CD8-positive, alpha-beta T cell (primary cell): ENCODE measurements at regions of chr12 and their contacts with region 1.

Region 1: DNA sequence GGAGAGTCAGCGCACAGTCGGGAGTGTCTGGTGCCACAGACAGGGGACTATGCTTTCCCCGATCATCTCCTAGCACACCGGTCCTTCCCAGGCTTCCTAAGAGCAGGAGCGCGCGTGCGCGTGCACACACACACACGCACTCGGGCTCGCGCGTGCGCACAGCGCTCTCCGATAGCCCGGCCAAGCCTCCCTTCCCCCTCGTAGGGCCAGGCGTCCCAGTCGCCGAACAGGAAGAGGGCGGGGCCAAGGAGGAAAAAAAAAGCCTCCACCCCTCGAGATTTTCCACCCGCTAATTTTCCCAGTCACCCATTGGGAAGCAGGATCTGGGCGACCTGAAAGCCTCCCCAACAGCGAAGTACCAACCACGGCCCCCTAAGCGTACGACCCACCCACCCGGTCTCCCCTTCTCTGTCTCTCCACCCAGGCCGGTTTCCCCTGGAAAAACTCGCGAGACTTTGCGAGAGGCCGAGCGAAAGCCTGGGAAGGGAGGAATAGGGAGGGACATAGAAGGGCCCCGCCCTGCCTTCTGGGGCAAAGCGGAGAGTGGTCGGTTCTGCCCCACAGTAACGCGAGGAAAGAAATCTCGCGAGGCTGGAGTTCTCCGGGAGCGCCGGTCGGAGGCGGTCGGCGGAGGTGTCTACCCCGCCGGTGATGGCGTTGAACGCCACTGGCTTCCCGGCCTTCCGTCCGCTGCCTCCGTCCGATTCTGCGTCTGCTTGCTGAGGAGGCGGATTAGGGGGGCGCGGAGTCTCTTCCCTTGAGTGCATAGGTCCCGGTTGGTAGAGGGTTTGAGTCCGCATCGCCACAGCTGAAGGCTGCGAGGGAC is at the starts of genes FGFR1OP2 and INTS13:
- DNase-seq: peak; percentile 90 to 99 (median 96)
- ATAC-seq: peak; percentile 89
- H3K4me3 ChIP-seq: peak within 1 kb of the TSS; percentile 92 to 97
- H3K4me3 Mint-ChIP-seq: peak within 1 kb of the TSS; percentile 98
- H3K27ac ChIP-seq: peak within 1 kb of the TSS; percentile 89 to 94
- H3K27ac Mint-ChIP-seq: peak within 1 kb of the TSS; percentile 97
- H3K4me1 ChIP-seq: peaks cover 47% of the 10 kb centered on the region
- H3K4me1 Mint-ChIP-seq: peaks cover 74% of the 10 kb centered on the region
- H3K27me3 ChIP-seq: no peaks in the 10 kb centered on the region
- H3K27me3 Mint-ChIP-seq: no peaks in the 10 kb centered on the region
- CTCF ChIP-seq: no peak
- total RNA-seq, gene FGFR1OP2: 44.1 to 47.5 TPM
- total RNA-seq, gene INTS13: 11.8 to 12.1 TPM

Region 2: DNA sequence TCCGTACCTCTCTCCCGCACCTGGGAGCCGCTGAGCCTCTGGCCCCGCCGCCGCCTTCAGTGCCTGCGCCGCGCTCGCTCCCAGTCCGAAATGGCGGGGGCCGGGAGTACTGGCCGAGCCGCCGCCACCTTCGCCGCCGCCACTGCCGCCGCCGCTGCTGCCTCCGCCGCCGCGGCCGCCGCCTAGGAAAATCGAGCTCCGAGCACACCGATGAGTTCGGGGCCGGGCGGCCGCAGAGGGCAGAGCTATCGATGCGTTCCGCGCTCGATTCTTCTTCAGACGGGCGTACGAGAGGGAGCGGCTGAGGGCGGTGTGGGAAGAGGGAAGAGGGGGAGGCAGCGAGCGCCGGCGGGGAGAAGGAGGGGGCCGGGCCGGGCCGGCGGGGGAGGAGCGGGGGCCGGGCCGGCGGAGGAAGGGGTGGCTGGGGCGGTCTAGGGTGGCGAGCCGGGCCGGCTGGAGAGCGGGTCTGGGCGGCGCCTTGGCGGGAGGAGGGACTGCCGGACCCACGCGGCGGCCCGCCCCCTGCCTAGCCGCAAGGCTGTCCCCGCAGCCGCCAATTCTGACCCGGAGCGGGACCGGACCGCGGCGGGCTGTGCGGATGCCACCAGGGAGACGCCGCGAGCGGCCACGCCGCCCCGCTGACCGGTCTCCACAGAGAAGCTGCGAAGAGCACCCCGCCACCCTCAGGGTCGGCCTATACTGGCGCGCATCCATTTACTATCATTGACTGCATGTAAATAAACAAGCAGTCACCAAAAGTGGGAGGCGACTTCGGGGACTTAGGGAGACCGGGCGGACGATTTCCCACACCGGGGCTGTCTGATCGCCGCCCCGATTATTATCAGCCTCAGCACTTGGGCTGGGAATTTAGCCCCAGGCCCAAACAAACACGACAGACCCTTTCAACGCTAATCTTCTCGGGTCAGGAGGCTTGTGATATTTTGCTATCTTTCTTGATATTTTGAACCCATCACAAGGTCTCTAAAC is 1687.1 kb before region 1 on chr12 and contains the start of gene KRAS:
- CTCF ChIA-PET with region 1: no interaction called
- POLR2A ChIA-PET with region 1: no interaction called
- intact Hi-C with region 1: loop called in 1 of 2 experiments (anchors 2 kb)
- DNase-seq: peak; percentile 84 to 98 (median 91)
- ATAC-seq: peak; percentile 90
- H3K4me3 ChIP-seq: peak within 1 kb of the TSS; percentile 70 to 79
- H3K4me3 Mint-ChIP-seq: peak within 1 kb of the TSS; percentile 93
- H3K27ac ChIP-seq: peak within 1 kb of the TSS; percentile 67 to 75
- H3K27ac Mint-ChIP-seq: peak within 1 kb of the TSS; percentile 95
- H3K4me1 ChIP-seq: peaks cover 11% of the 10 kb centered on the region
- H3K4me1 Mint-ChIP-seq: peaks cover 38% of the 10 kb centered on the region
- H3K27me3 ChIP-seq: no peaks in the 10 kb centered on the region
- H3K27me3 Mint-ChIP-seq: no peaks in the 10 kb centered on the region
- CTCF ChIP-seq: no peak
- total RNA-seq, gene KRAS: 47.1 to 49.3 TPM

Region 3: DNA sequence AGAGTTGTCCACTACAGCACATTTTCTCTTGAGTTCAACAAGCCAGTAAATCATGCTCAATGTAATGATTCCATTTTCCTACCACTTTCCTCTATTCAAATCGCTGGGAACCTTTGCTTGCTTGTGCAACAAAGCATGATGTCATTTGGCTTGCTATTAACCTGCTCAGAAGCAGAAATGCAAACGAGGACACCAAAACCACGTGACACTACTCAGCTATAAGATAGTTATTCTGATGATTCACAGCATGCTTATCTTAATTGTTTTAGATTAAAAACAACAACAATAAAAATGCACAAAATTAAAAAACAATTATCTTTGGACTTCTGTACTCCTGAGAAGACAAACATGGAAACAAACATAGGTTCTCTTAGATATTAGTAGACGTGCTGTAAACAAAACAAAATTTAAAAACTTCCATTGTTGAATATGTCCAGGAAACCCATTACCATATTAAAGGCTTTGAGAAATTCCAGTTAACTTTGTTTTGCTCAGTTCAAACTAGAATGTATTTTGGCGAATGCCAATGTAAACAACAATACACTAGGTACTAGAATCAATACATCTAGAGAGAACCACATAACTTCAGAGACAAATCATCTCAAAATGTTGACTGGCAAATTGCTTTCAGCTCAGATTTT is 1609.9 kb before region 1 on chr12:
- CTCF ChIA-PET with region 1: no interaction called
- POLR2A ChIA-PET with region 1: no interaction called
- intact Hi-C with region 1: no loop called
- DNase-seq: no peak
- ATAC-seq: no peak
- H3K4me3 ChIP-seq: no peak overlapping the region
- H3K4me3 Mint-ChIP-seq: no peak overlapping the region
- H3K27ac ChIP-seq: no peak overlapping the region
- H3K27ac Mint-ChIP-seq: no peak overlapping the region
- H3K4me1 ChIP-seq: peaks cover 11% of the 10 kb centered on the region
- H3K4me1 Mint-ChIP-seq: peaks cover 19% of the 10 kb centered on the region
- H3K27me3 ChIP-seq: no peaks in the 10 kb centered on the region
- H3K27me3 Mint-ChIP-seq: no peaks in the 10 kb centered on the region
- CTCF ChIP-seq: no peak

Region 4: DNA sequence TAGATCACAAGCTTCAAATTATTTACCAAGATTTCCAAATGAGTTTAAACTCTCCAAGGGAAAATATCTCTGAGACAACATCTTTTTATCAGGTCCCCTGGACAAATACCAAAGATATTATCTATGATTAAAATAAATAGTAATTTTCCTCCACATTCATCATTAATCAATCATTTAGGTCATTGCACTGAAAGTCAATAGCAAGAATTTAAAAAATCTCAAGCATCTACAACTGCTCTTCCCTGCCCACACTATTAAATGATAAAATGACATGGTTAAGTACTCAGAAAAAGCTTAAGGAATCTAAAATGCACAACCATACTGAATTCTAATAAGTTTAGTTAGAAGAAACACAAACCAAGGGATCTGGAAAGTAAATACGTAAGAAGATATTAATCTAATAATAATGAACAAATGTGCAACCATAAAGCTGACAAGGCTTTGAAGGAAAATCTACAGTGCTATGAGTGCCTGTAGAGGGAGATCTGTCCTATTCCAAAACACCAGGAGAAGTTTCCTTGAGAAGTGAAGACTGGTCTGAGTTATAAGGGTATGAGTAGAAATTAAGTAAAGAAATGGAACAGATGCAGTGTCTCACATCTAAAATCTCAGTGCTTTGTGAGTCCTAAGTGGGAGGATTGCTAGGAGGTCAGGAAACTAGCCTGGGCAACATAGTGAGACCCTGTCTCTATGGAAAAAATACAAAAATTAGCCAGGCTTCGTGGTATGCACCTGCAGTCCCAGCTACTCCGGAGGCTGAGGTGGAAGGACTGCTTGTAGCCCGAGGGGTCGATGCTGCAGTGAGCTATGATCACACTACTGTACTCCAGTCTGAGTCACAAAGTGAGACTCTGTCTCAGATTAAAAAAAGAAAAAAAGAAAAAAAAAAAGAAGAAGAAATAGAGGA is 19.5 kb before region 1 on chr12:
- CTCF ChIA-PET with region 1: no interaction called
- POLR2A ChIA-PET with region 1: no interaction called
- intact Hi-C with region 1: no loop called
- DNase-seq: no peak
- ATAC-seq: no peak
- H3K4me3 ChIP-seq: no peak overlapping the region
- H3K4me3 Mint-ChIP-seq: no peak overlapping the region
- H3K27ac ChIP-seq: no peak overlapping the region
- H3K27ac Mint-ChIP-seq: no peak overlapping the region
- H3K4me1 ChIP-seq: no peaks in the 10 kb centered on the region
- H3K4me1 Mint-ChIP-seq: no peaks in the 10 kb centered on the region
- H3K27me3 ChIP-seq: no peaks in the 10 kb centered on the region
- H3K27me3 Mint-ChIP-seq: no peaks in the 10 kb centered on the region
- CTCF ChIP-seq: no peak

Region 5: GRCh38 chr12:26954027-26954426 is 15.9 kb after region 1 on chr12:
- CTCF ChIA-PET with region 1: no interaction called
- POLR2A ChIA-PET with region 1: no interaction called
- intact Hi-C with region 1: loop called in 1 of 2 experiments (anchors 2 kb)
- DNase-seq: no peak
- ATAC-seq: no peak
- H3K4me3 ChIP-seq: no peak overlapping the region
- H3K4me3 Mint-ChIP-seq: no peak overlapping the region
- H3K27ac ChIP-seq: no peak overlapping the region
- H3K27ac Mint-ChIP-seq: peak overlapping the region; percentile 45
- H3K4me1 ChIP-seq: peaks cover 9% of the 10 kb centered on the region
- H3K4me1 Mint-ChIP-seq: peaks cover 48% of the 10 kb centered on the region
- H3K27me3 ChIP-seq: no peaks in the 10 kb centered on the region
- H3K27me3 Mint-ChIP-seq: no peaks in the 10 kb centered on the region
- CTCF ChIP-seq: no peak

Region 6: GRCh38 chr12:27243804-27244683 is 306.0 kb after region 1 on chr12 and contains the start of gene STK38L:
- CTCF ChIA-PET with region 1: no interaction called
- POLR2A ChIA-PET with region 1: no interaction called
- intact Hi-C with region 1: loop called (anchors 1 to 5 kb)
- DNase-seq: peak; percentile 90 to 99 (median 98)
- ATAC-seq: peak; percentile 95
- H3K4me3 ChIP-seq: peak within 1 kb of the TSS; percentile 84 to 89
- H3K4me3 Mint-ChIP-seq: peak within 1 kb of the TSS; percentile 96
- H3K27ac ChIP-seq: peak within 1 kb of the TSS; percentile 76
- H3K27ac Mint-ChIP-seq: peak within 1 kb of the TSS; percentile 96
- H3K4me1 ChIP-seq: peaks cover 14% of the 10 kb centered on the region
- H3K4me1 Mint-ChIP-seq: peaks cover 52% of the 10 kb centered on the region
- H3K27me3 ChIP-seq: no peaks in the 10 kb centered on the region
- H3K27me3 Mint-ChIP-seq: no peaks in the 10 kb centered on the region
- CTCF ChIP-seq: no peak
- total RNA-seq, gene STK38L: 27.0 to 28.6 TPM

Region 7: DNA sequence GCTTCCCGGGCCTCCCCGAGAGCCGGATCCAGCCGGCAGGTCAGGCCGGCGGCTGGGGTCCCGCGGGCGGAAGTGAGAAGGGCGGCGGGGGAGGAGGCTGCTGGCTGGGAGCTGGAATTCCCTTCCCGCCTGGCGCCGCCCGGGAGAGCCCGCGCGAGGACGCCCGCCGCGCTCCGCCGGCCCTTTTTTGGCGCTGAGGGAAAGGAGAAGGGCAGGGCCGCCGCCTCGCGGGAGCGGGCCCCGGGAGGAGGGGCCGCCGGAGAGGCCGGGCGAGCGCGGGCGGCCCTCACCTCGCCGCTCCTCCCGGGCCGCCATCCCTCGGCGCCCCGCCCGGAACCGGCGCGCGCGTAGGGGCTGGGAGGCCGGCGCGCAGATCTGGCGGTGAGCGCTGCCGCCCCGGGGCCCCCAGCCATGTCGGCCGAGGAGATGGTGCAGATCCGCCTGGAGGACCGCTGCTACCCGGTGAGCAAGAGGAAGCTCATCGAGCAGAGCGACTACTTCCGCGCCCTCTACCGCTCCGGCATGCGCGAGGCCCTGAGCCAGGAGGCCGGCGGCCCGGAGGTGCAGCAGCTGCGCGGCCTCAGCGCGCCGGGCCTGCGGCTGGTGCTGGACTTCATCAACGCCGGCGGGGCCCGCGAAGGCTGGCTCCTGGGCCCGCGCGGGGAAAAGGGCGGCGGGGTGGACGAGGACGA is 842.0 kb after region 1 on chr12 and contains the starts of genes KLHL42 and MANSC4:
- CTCF ChIA-PET with region 1: no interaction called
- POLR2A ChIA-PET with region 1: no interaction called
- intact Hi-C with region 1: loop called in 1 of 2 experiments (anchors 2 kb)
- DNase-seq: peak; percentile 27 to 81 (median 68)
- ATAC-seq: peak; percentile 84
- H3K4me3 ChIP-seq: peak within 1 kb of the TSS; percentile 69 to 73
- H3K4me3 Mint-ChIP-seq: peak within 1 kb of the TSS; percentile 88
- H3K27ac ChIP-seq: peak within 1 kb of the TSS; percentile 46 to 53
- H3K27ac Mint-ChIP-seq: peak within 1 kb of the TSS; percentile 91
- H3K4me1 ChIP-seq: peaks cover 15% of the 10 kb centered on the region
- H3K4me1 Mint-ChIP-seq: peaks cover 42% of the 10 kb centered on the region
- H3K27me3 ChIP-seq: no peaks in the 10 kb centered on the region
- H3K27me3 Mint-ChIP-seq: no peaks in the 10 kb centered on the region
- CTCF ChIP-seq: no peak
- total RNA-seq, gene KLHL42: 11.0 to 11.1 TPM
- total RNA-seq, gene MANSC4: not detected